ENCODE measurements at regions of chr12 and their contacts with region 1.

Region 1: DNA sequence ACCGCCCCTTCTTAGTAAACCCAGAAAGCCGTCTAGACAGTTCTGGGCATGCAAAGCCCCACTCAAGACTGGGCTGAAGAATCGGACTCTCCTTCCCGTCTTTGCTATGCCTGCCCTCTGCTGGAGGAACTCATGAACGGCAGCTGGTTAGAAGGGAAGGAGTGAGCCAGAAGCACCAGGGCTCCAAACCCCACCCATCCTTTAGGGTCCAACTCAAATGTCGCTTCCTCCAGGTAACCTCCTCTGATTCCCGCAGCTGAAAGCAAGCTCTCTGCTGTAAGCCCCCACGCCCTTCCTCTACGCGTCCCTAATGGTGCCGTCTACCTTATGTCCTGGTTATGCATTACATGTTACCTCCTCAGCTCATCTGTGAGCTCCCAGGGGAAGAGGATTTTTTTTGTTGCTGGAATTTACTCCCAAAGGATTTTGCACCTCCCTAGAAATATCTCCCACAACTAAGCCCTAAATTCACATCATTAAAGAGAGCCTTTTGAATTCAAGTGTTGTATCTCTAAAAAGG is 59.0 kb upstream of the SCN8A start:
- DNase-seq: peak; percentile 56 to 83 (median 64)
- ATAC-seq: peak; percentile 94
- H3K4me3 ChIP-seq: no peak overlapping the region
- H3K4me3 Mint-ChIP-seq: no peak overlapping the region
- H3K27ac ChIP-seq: no peak overlapping the region
- H3K27ac Mint-ChIP-seq: no peak overlapping the region
- H3K4me1 ChIP-seq: peaks cover 6% of the 10 kb centered on the region
- H3K4me1 Mint-ChIP-seq: no peaks in the 10 kb centered on the region
- H3K27me3 ChIP-seq: no peaks in the 10 kb centered on the region
- H3K27me3 Mint-ChIP-seq: peaks cover 7% of the 10 kb centered on the region
- CTCF ChIP-seq: peak; percentile 85

Region 2: DNA sequence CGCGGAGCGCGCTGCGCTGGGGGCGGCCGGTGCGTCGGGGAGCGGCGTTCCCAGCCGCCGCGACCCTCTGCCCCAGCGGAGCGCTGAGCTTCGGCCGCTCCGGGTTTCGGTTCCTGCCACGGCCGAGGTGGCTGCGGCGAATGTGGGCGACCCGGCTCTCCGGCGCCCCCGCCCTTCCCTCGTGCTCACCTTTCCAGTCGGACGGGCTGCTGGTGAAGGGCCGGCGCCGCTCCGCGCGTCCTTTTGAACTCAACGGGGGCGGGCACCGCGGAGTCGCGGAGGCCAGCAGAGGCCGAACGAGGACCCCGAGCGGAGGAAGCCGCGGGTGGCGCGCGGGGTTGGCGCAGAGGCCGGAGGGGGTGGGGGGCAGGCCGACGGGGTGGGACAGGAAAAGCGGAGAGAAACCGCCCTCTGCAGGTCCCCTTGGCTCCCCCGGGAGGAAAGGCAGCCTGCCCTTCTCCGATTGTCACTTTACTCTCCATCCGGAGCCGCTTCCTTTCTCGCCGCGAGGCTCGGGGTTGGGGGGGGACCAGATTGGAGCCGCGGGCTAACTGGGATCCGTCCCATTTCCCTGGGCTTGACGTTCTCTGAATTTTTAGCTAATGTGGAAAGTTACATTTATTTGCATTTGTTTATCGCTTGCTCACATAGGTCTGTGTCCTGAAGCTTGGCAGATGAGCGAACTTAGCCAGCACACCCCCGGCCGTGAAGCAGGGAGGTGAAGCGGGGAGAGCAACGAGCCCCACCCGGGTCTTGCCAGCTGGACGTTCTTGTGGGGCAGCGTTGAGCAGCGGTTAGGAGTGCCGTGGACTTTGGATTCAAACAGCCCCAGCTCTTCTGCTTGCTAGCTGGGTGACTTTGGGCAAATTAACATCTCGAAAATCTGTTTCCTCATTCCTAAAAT is 261.7 kb before region 1 on chr12 and contains the start of gene SMAGP:
- CTCF ChIA-PET with region 1: no interaction called
- POLR2A ChIA-PET with region 1: interaction called, 4 read pairs
- intact Hi-C with region 1: loop called (anchors 2 to 5 kb)
- DNase-seq: peak in 13 of 14 experiments; percentile 14 to 70 (median 28)
- ATAC-seq: peak; percentile 44
- H3K4me3 ChIP-seq: peak within 1 kb of the TSS; percentile 72
- H3K4me3 Mint-ChIP-seq: peak within 1 kb of the TSS; percentile 95
- H3K27ac ChIP-seq: peak within 1 kb of the TSS in 1 of 2 donors; percentile 36
- H3K27ac Mint-ChIP-seq: peak within 1 kb of the TSS; percentile 71
- H3K4me1 ChIP-seq: peaks cover 21% of the 10 kb centered on the region
- H3K4me1 Mint-ChIP-seq: peaks cover 32% of the 10 kb centered on the region
- H3K27me3 ChIP-seq: no peaks in the 10 kb centered on the region
- H3K27me3 Mint-ChIP-seq: no peaks in the 10 kb centered on the region
- CTCF ChIP-seq: no peak
- total RNA-seq, gene SMAGP: 2.5 to 3.0 TPM

Region 3: GRCh38 chr12:51351913-51352532 is 180.0 kb before region 1 on chr12:
- CTCF ChIA-PET with region 1: no interaction called
- POLR2A ChIA-PET with region 1: no interaction called
- intact Hi-C with region 1: loop called in 1 of 2 experiments (anchors 5 kb)
- DNase-seq: peak in 13 of 14 experiments; percentile 16 to 76 (median 27)
- ATAC-seq: peak; percentile 90
- H3K4me3 ChIP-seq: no peak overlapping the region
- H3K4me3 Mint-ChIP-seq: no peak overlapping the region
- H3K27ac ChIP-seq: no peak overlapping the region
- H3K27ac Mint-ChIP-seq: no peak overlapping the region
- H3K4me1 ChIP-seq: peaks cover 5% of the 10 kb centered on the region
- H3K4me1 Mint-ChIP-seq: peaks cover 10% of the 10 kb centered on the region
- H3K27me3 ChIP-seq: no peaks in the 10 kb centered on the region
- H3K27me3 Mint-ChIP-seq: no peaks in the 10 kb centered on the region
- CTCF ChIP-seq: peak; percentile 63

Region 4: DNA sequence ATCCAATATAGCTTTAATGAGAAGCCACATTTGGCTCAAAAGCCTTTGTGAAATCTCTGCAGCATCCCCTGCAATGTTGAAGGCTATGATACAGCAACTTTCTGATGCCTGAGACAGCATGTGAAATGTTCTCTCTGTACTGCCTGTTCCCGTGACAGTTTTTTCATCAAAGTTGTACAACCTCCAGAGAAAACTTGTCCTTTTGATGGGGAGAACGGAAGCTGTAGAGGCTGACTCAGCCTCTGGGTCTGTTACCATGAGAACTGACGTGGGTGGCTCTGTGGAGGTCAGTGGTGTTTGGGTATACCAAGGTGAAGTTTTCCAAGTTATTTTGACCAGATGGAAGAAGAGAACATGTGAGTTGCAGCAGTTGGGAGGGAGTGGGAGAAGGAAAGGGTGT is 90.5 kb before region 1 on chr12:
- CTCF ChIA-PET with region 1: no interaction called
- POLR2A ChIA-PET with region 1: no interaction called
- intact Hi-C with region 1: no loop called
- DNase-seq: no peak
- ATAC-seq: no peak
- H3K4me3 ChIP-seq: no peak overlapping the region
- H3K4me3 Mint-ChIP-seq: no peak overlapping the region
- H3K27ac ChIP-seq: no peak overlapping the region
- H3K27ac Mint-ChIP-seq: no peak overlapping the region
- H3K4me1 ChIP-seq: peaks cover 7% of the 10 kb centered on the region
- H3K4me1 Mint-ChIP-seq: peaks cover 15% of the 10 kb centered on the region
- H3K27me3 ChIP-seq: no peaks in the 10 kb centered on the region
- H3K27me3 Mint-ChIP-seq: no peaks in the 10 kb centered on the region
- CTCF ChIP-seq: no peak

Region 5: GRCh38 chr12:51496895-51497294 is 35.1 kb before region 1 on chr12:
- CTCF ChIA-PET with region 1: no interaction called
- POLR2A ChIA-PET with region 1: no interaction called
- intact Hi-C with region 1: no loop called
- DNase-seq: no peak
- ATAC-seq: no peak
- H3K4me3 ChIP-seq: no peak overlapping the region
- H3K4me3 Mint-ChIP-seq: no peak overlapping the region
- H3K27ac ChIP-seq: no peak overlapping the region
- H3K27ac Mint-ChIP-seq: no peak overlapping the region
- H3K4me1 ChIP-seq: no peaks in the 10 kb centered on the region
- H3K4me1 Mint-ChIP-seq: no peaks in the 10 kb centered on the region
- H3K27me3 ChIP-seq: no peaks in the 10 kb centered on the region
- H3K27me3 Mint-ChIP-seq: no peaks in the 10 kb centered on the region
- CTCF ChIP-seq: no peak

Region 6: GRCh38 chr12:51590347-51591019 is 58.4 kb after region 1 on chr12:
- CTCF ChIA-PET with region 1: no interaction called
- POLR2A ChIA-PET with region 1: no interaction called
- intact Hi-C with region 1: no loop called
- DNase-seq: peak; percentile 44 to 88 (median 64)
- ATAC-seq: peak; percentile 88
- H3K4me3 ChIP-seq: peak overlapping the region; percentile 51
- H3K4me3 Mint-ChIP-seq: peak overlapping the region; percentile 86
- H3K27ac ChIP-seq: no peak overlapping the region
- H3K27ac Mint-ChIP-seq: no peak overlapping the region
- H3K4me1 ChIP-seq: peaks cover 16% of the 10 kb centered on the region
- H3K4me1 Mint-ChIP-seq: peaks cover 23% of the 10 kb centered on the region
- H3K27me3 ChIP-seq: peaks cover 31 to 40% of the 10 kb centered on the region in 2 experiments
- H3K27me3 Mint-ChIP-seq: peaks cover 68% of the 10 kb centered on the region
- CTCF ChIP-seq: no peak